ENCODE measurements at regions of chr5 and their contacts with region 1.

Region 1: GRCh38 chr5:151164686-151165392 is 7.3 kb upstream of the ANXA6 start:
- DNase-seq: peak; percentile 78
- CTCF ChIP-seq: peak; percentile 89

Region 2: GRCh38 chr5:151123897-151124751 is 40.7 kb before region 1 on chr5:
- in situ Hi-C with region 1: loop called (anchors 5 kb)
- DNase-seq: peak; percentile 84
- CTCF ChIP-seq: no peak

Region 3: GRCh38 chr5:151880324-151880723 is 715.5 kb after region 1 on chr5:
- in situ Hi-C with region 1: no loop called
- DNase-seq: no peak
- CTCF ChIP-seq: no peak

Measured in GM13977 (cell line).